Adrenal gland (tissue), 19 donors: ENCODE measurements at regions of chr10 and their contacts with region 1.

Region 1: GRCh38 chr10:15744217-15744865 is 24.6 kb upstream of the ITGA8 start:
- DNase-seq: peak; percentile 23 to 74 (median 50)
- H3K4me3 ChIP-seq: no peak overlapping the region
- H3K27ac ChIP-seq: no peak overlapping the region
- H3K4me1 ChIP-seq: no peaks in the 10 kb centered on the region
- H3K27me3 ChIP-seq: no peaks in the 10 kb centered on the region
- CTCF ChIP-seq: peak; percentile 12 to 55 (median 36)
- POLR2A ChIP-seq: no peak

Region 2: GRCh38 chr10:15122477-15123030 is 621.8 kb before region 1 on chr10:
- intact Hi-C with region 1: no loop called
- DNase-seq: no peak
- H3K4me3 ChIP-seq: no peak overlapping the region
- H3K27ac ChIP-seq: no peak overlapping the region
- H3K4me1 ChIP-seq: no peaks in the 10 kb centered on the region
- H3K27me3 ChIP-seq: no peaks in the 10 kb centered on the region
- CTCF ChIP-seq: no peak
- POLR2A ChIP-seq: no peak

Region 3: GRCh38 chr10:15836807-15837206 is 92.5 kb after region 1 on chr10:
- intact Hi-C with region 1: loop called in 1 of 2 experiments (anchors 10 kb)
- DNase-seq: no peak
- H3K4me3 ChIP-seq: no peak overlapping the region
- H3K27ac ChIP-seq: no peak overlapping the region
- H3K4me1 ChIP-seq: peaks cover 0 to 19% of the 10 kb centered on the region in 2 donors
- H3K27me3 ChIP-seq: no peaks in the 10 kb centered on the region
- CTCF ChIP-seq: no peak
- POLR2A ChIP-seq: no peak